ENCODE measurements at regions of chr3 and their contacts with region 1.

Region 1: GRCh38 chr3:152428577-152428976 is 159.8 kb downstream of the MBNL1 start:
- DNase-seq: no peak
- H3K4me3 ChIP-seq: no peak overlapping the region
- H3K27ac ChIP-seq: peak overlapping the region in 1 of 2 donors; percentile 0
- H3K4me1 ChIP-seq: no peaks in the 10 kb centered on the region
- H3K27me3 ChIP-seq: no peaks in the 10 kb centered on the region
- CTCF ChIP-seq: no peak
- POLR2A ChIP-seq: no peak

Region 2: GRCh38 chr3:150639262-150639661 is 1789.3 kb before region 1 on chr3:
- intact Hi-C with region 1: no loop called
- DNase-seq: no peak
- H3K4me3 ChIP-seq: no peak overlapping the region
- H3K27ac ChIP-seq: no peak overlapping the region
- H3K4me1 ChIP-seq: no peaks in the 10 kb centered on the region
- H3K27me3 ChIP-seq: no peaks in the 10 kb centered on the region
- CTCF ChIP-seq: no peak
- POLR2A ChIP-seq: no peak

Region 3: DNA sequence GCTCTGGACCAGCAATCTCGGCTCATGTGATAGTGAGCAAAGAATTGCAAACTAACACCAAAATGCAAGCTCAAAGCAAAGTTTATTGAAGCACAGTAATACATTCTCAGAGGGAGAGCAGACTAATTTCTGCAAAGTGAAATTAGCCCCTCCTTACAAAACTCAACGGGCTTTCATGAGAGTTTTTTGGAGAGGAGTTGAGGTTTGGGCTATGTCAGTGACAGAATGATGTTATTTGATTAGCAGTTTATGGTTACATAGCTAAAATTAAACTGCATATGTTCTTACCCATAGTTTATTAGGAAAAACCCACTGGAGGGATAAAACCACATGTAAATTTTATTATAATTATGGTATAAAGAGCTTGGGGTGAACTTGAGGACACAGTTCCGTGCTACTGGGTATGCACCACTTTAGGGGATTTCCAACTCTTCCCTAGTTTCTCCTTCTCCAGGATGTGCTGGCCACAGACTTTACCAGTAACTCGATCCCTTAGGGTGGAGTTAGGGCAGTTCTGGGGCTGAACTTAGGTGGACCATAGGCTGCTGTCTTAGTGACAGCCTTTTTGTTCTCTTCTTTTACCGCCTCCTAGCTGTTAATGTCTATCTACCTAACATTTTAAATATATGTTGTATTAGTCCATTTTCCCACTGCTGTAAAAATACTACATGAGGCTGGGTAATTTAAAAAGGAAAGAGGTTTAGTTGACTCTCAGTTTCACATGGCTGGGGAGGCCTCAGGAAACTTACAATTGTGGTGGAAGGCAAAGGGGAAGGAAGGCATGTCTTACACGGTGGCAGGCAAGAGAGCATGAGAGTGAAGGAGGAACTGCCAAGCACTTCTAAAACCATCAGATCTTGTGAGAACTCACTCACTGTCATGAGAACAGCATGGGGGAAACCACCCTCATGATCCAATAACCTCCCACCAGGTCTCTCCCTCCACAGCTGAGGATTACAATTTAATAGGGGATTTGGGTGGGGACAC is 703.7 kb before region 1 on chr3:
- intact Hi-C with region 1: loop called (anchors 5 kb)
- DNase-seq: no peak
- H3K4me3 ChIP-seq: no peak overlapping the region
- H3K27ac ChIP-seq: no peak overlapping the region
- H3K4me1 ChIP-seq: no peaks in the 10 kb centered on the region
- H3K27me3 ChIP-seq: no peaks in the 10 kb centered on the region
- CTCF ChIP-seq: no peak
- POLR2A ChIP-seq: no peak